IMR-90 (cell line): ENCODE measurements at regions of chr4 and their contacts with region 1.

Region 1: GRCh38 chr4:78951862-78952472 is 12.7 kb upstream of the PAQR3 start:
- DNase-seq: peak; percentile 45
- ATAC-seq: peak; percentile 80
- H3K4me3 ChIP-seq: no peak overlapping the region
- H3K27ac ChIP-seq: no peak overlapping the region
- H3K4me1 ChIP-seq: no peaks in the 10 kb centered on the region
- H3K27me3 ChIP-seq: peaks cover 5% of the 10 kb centered on the region
- CTCF ChIP-seq: peak; percentile 72
- POLR2A ChIP-seq: no peak
- RAD21 ChIP-seq: peak; percentile 77

Region 2: DNA sequence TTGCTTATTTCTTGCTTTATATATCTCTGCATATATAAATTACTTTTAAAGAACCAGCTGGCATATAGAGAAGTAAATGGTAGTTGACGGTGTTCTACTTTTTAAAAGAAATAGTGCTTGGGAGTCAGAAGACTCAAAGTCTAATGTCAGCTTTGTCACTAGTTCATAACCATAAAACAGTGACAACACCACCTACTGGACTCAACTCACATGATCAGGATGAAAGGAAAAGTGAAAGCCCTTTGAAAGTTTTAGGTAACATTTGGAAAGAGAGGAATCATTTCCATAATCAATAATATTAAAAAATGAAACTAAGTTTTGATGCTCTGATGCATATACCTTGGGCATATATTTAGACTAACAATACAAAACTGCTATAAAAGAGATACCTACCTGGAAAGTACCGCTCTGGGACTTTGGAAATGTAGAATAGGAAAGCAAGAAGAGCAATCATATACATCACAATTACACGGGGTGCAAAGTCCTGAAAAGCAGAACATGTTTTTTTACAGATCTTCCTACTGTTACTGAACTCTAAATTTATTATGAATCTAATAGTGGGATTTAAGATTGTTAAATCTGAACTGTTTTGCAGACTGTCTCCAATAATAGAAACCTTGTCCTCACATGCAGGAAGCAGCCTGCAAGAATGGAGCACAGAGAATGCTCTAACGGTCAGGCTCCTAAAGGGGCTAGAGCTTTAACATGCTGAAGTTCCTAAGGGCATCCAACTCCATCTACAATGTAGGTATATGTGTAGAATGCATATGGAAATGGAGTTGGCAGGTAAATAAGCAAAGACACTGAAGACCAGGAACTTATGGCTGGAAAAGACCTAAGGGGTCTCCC is 28.3 kb before region 1 on chr4:
- CTCF ChIA-PET with region 1: no interaction called
- POLR2A ChIA-PET with region 1: no interaction called
- dilution Hi-C with region 1: no loop called
- in situ Hi-C with region 1: no loop called
- intact Hi-C with region 1: no loop called
- DNase-seq: no peak
- ATAC-seq: no peak
- H3K4me3 ChIP-seq: no peak overlapping the region
- H3K27ac ChIP-seq: no peak overlapping the region
- H3K4me1 ChIP-seq: peaks cover 2% of the 10 kb centered on the region; the same call in 1 of the 2 replicates
- H3K27me3 ChIP-seq: no peaks in the 10 kb centered on the region
- CTCF ChIP-seq: no peak; the same call in 1 of the 2 replicates
- POLR2A ChIP-seq: no peak
- RAD21 ChIP-seq: no peak

Region 3: GRCh38 chr4:79576429-79576753 is 624.4 kb after region 1 on chr4:
- CTCF ChIA-PET with region 1: no interaction called
- POLR2A ChIA-PET with region 1: no interaction called
- dilution Hi-C with region 1: no loop called
- in situ Hi-C with region 1: no loop called
- intact Hi-C with region 1: loop called (anchors 2 kb)
- DNase-seq: peak; percentile 18
- ATAC-seq: peak; percentile 84
- H3K4me3 ChIP-seq: no peak overlapping the region
- H3K27ac ChIP-seq: no peak overlapping the region
- H3K4me1 ChIP-seq: no peaks in the 10 kb centered on the region
- H3K27me3 ChIP-seq: no peaks in the 10 kb centered on the region
- CTCF ChIP-seq: peak; percentile 36
- POLR2A ChIP-seq: no peak
- RAD21 ChIP-seq: peak; percentile 44

Region 4: GRCh38 chr4:79917246-79917645 is 965.3 kb after region 1 on chr4:
- CTCF ChIA-PET with region 1: no interaction called
- POLR2A ChIA-PET with region 1: no interaction called
- dilution Hi-C with region 1: no loop called
- in situ Hi-C with region 1: no loop called
- intact Hi-C with region 1: loop called (anchors 10 kb)
- DNase-seq: peak; percentile 44
- ATAC-seq: no peak
- H3K4me3 ChIP-seq: no peak overlapping the region
- H3K27ac ChIP-seq: no peak overlapping the region
- H3K4me1 ChIP-seq: peaks cover 6% of the 10 kb centered on the region; the same call in 1 of the 2 replicates
- H3K27me3 ChIP-seq: no peaks in the 10 kb centered on the region
- CTCF ChIP-seq: peak; percentile 50
- POLR2A ChIP-seq: no peak
- RAD21 ChIP-seq: peak; percentile 44

Region 5: DNA sequence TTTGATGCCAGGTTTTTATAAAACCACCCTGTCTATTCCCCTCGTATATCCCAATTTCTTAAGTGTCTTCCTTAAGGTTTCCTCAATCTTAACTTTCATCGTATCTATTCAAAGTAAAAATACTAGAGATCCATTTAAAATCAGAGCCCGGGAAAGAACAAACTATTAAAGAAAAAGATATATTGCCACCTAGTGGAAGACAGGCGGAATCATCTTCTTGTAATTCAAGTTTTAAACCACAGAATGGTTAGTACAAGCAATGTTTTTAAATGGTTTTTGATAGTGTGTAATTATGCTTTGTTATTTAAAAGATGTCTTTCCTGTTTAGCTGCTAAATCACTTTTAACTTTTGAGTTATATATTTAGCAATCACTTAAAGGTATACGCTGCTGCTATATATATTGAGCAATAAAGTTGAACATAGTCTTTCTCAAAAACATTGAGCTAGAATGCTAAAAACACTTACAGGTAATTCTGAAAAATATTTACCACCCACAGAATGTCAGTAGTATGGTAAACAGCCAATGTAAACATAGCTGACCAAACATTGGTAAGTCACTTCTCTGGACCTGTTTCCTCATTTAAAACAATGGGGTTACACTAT is 1263.6 kb after region 1 on chr4:
- CTCF ChIA-PET with region 1: interaction called, 4 read pairs
- POLR2A ChIA-PET with region 1: no interaction called
- dilution Hi-C with region 1: no loop called
- in situ Hi-C with region 1: no loop called
- intact Hi-C with region 1: loop called (anchors 1 kb)
- DNase-seq: peak; percentile 64
- ATAC-seq: no peak
- H3K4me3 ChIP-seq: no peak overlapping the region
- H3K27ac ChIP-seq: no peak overlapping the region
- H3K4me1 ChIP-seq: peaks cover 9% of the 10 kb centered on the region
- H3K27me3 ChIP-seq: no peaks in the 10 kb centered on the region
- CTCF ChIP-seq: peak; percentile 74
- POLR2A ChIP-seq: no peak
- RAD21 ChIP-seq: peak; percentile 68

Region 6: DNA sequence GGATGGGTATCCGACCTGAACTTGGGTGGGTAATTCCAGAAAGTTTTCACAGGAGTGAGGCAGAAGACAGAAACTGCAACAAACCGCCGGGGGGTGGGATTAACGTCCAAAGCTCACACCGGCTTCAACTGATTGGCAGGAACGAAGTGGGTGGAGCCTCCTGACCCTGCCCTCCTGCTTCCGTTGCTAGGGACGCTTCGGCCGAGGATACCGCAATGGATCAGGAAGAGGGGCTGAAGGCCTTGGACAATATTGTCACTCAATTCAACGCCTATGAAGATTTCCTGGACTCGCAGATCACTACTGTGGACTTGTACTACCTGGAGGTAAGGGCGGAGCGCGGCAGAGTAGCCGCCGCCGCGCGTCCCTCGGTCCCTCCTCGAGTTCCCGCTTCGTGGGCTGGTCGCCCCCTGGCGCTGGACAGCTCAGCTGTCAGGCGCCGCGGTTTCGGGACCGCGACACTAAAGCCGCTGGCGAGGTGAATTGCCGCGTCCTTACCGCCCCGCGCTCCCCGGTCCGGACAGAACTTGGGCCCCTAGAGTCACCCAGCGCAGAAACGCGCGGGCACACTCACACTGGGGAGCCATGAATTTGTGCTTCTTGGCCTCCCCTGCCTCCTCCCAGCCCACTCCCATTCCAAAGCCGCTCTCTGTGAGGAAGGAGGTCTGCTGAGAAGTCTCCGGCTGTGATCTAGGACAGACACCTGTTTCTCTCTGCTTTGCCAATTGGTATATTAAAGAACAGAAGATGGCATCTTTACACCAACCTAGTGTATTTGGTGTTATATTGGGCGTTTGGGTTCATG is 1383.8 kb after region 1 on chr4 and contains the start of gene CFAP299:
- CTCF ChIA-PET with region 1: no interaction called
- POLR2A ChIA-PET with region 1: no interaction called
- dilution Hi-C with region 1: no loop called
- in situ Hi-C with region 1: loop called (anchors 25 kb)
- intact Hi-C with region 1: loop called (anchors 5 kb)
- DNase-seq: peak; percentile 90
- ATAC-seq: peak; percentile 99
- H3K4me3 ChIP-seq: peak within 1 kb of the TSS; percentile 84
- H3K27ac ChIP-seq: no peak within 1 kb of the TSS
- H3K4me1 ChIP-seq: peaks cover 4% of the 10 kb centered on the region
- H3K27me3 ChIP-seq: no peaks in the 10 kb centered on the region
- CTCF ChIP-seq: peak; percentile 58
- POLR2A ChIP-seq: 0 out of 2 replicates have a peak, but pooled peaks have one; percentile 25
- RAD21 ChIP-seq: peak; percentile 59
- total RNA-seq, gene CFAP299: 1.1 and 1.9 TPM in 2 replicates